Activated T-helper 2 cell treated with anti-CD3 and anti-CD28 coated beads, Interferon-gamma antibody, Interleukin-2, Interleukin-4, amounts not matched to agents 10 μg/mL and 5 μg/mL and 100 μg/mL, durations not matched to agents 14 hours and 24 hours and 36 hours (primary cell): ENCODE measurements at regions of chr10 and their contacts with region 1.

Region 1: DNA sequence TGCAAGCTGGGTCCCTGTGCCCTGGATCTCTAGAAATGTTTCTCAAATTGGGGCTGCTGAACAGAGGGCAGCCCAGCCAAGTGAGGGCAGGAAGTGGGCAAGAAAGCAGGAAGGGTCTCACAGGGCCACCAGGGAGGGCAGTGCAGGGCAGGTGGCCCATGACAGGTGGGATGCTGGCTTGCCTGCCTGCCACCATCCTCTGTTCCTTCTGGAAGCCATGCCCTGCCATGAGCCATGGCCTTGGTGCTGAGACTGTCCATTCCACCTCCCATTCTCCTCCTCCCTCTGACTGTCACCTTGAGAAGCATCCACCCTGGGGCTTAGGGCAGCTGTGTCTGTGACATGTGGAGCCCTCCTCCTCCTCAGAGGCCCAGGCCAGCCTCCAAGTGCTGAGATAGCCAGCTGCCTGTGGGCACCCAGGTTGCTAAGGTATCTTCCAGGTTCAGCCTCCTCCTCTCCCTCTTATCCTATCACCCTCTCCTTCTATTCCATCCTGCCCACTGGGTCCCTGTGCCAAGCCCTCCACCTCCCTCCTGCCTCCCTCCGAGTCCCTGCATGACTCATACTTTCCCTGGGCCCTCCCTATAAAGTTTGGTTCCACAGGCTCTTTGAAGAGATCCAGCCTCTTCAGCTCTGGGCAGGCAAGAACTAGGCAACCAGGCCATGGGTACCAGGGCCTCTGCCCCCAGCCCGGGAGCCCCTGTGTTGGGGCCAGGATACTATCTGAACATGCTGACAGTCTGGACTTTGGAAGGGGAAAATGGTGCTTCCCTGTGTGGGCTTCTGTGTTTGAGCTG is 1.3 kb downstream of the VSIR start:
- DNase-seq: no peak
- H3K4me3 Mint-ChIP-seq: peak overlapping the region; percentile 86
- H3K27ac Mint-ChIP-seq: peak overlapping the region; percentile 97
- H3K4me1 Mint-ChIP-seq: peaks cover 64% of the 10 kb centered on the region
- H3K27me3 Mint-ChIP-seq: no peaks in the 10 kb centered on the region

Region 2: GRCh38 chr10:71314028-71314693 is 457.9 kb before region 1 on chr10:
- intact Hi-C with region 1: loop called (anchors 1 kb)
- DNase-seq: peak; percentile 40
- H3K4me3 Mint-ChIP-seq: no peak overlapping the region
- H3K27ac Mint-ChIP-seq: no peak overlapping the region
- H3K4me1 Mint-ChIP-seq: peaks cover 23% of the 10 kb centered on the region
- H3K27me3 Mint-ChIP-seq: peaks cover 15% of the 10 kb centered on the region

Region 3: GRCh38 chr10:71684356-71685173 is 87.5 kb before region 1 on chr10:
- intact Hi-C with region 1: no loop called
- DNase-seq: no peak
- H3K4me3 Mint-ChIP-seq: no peak overlapping the region
- H3K27ac Mint-ChIP-seq: no peak overlapping the region
- H3K4me1 Mint-ChIP-seq: peaks cover 2% of the 10 kb centered on the region
- H3K27me3 Mint-ChIP-seq: no peaks in the 10 kb centered on the region

Region 4: GRCh38 chr10:71696628-71697326 is 75.2 kb before region 1 on chr10:
- intact Hi-C with region 1: loop called (anchors 1 kb)
- DNase-seq: peak; percentile 48
- H3K4me3 Mint-ChIP-seq: no peak overlapping the region
- H3K27ac Mint-ChIP-seq: no peak overlapping the region
- H3K4me1 Mint-ChIP-seq: peaks cover 28% of the 10 kb centered on the region
- H3K27me3 Mint-ChIP-seq: no peaks in the 10 kb centered on the region

Region 5: DNA sequence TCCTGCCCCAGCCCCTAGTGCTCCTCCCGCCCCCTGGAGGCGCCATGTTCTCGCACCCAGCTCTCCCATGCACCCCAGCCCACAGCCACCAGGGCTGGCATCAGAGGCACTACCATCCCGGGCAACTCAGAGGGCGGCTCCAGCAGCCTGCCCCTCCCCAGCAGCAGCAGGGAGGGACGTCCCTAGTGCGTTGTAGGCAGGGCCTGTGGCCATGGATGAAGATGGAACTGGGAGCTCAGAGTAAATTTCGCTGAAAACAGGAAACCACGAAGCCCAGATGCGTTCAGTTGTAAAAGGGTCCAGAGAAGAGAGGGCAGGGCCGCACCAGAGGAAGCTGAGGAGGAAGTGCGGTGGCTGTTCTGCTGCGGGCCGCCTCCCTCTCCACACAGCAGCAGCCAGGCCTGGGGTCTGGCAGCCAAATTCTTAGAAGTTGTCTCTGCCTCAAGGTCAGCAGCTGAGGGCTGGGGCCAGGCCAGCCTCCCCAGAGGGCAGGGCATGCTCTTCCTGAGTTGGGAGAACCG is 23.3 kb before region 1 on chr10:
- intact Hi-C with region 1: loop called (anchors 1 kb)
- DNase-seq: peak; percentile 83
- H3K4me3 Mint-ChIP-seq: peak overlapping the region; percentile 69
- H3K27ac Mint-ChIP-seq: peak overlapping the region; percentile 99
- H3K4me1 Mint-ChIP-seq: peaks cover 85% of the 10 kb centered on the region
- H3K27me3 Mint-ChIP-seq: no peaks in the 10 kb centered on the region

Region 6: GRCh38 chr10:71850637-71851464 is 78.8 kb after region 1 on chr10 and contains the start of gene PSAP:
- intact Hi-C with region 1: loop called (anchors 2 kb)
- DNase-seq: peak; percentile 98
- H3K4me3 Mint-ChIP-seq: peak within 1 kb of the TSS; percentile 92
- H3K27ac Mint-ChIP-seq: peak within 1 kb of the TSS; percentile 64
- H3K4me1 Mint-ChIP-seq: peaks cover 34% of the 10 kb centered on the region
- H3K27me3 Mint-ChIP-seq: no peaks in the 10 kb centered on the region
- total RNA-seq, gene PSAP: 108 and 110 TPM in 2 replicates